MCF 10A (cell line): ENCODE measurements at regions of chr22 and their contacts with region 1.

Region 1: GRCh38 chr22:39543095-39543494 is 10.5 kb upstream of the RPS19BP1 start:
- DNase-seq: no peak
- H3K4me3 Mint-ChIP-seq: no peak overlapping the region
- H3K27ac Mint-ChIP-seq: no peak overlapping the region
- H3K4me1 Mint-ChIP-seq: peaks cover 8% of the 10 kb centered on the region
- H3K27me3 Mint-ChIP-seq: peaks cover 20% of the 10 kb centered on the region
- CTCF ChIP-seq: peak; percentile 30

Region 2: GRCh38 chr22:38843716-38844660 is 699.1 kb before region 1 on chr22 and contains the start of gene NPTXR:
- CTCF ChIA-PET with region 1: no interaction called
- POLR2A ChIA-PET with region 1: no interaction called
- intact Hi-C with region 1: no loop called
- DNase-seq: no peak
- H3K4me3 Mint-ChIP-seq: peak within 1 kb of the TSS; percentile 62
- H3K27ac Mint-ChIP-seq: no peak within 1 kb of the TSS
- H3K4me1 Mint-ChIP-seq: peaks cover 14% of the 10 kb centered on the region
- H3K27me3 Mint-ChIP-seq: peaks cover 58% of the 10 kb centered on the region
- CTCF ChIP-seq: no peak
- total RNA-seq, gene NPTXR: 0.93 and 0.96 TPM in 2 replicates

Region 3: GRCh38 chr22:39943337-39943736 is 400.2 kb after region 1 on chr22:
- CTCF ChIA-PET with region 1: no interaction called
- POLR2A ChIA-PET with region 1: no interaction called
- intact Hi-C with region 1: loop called (anchors 5 kb)
- DNase-seq: no peak
- H3K4me3 Mint-ChIP-seq: no peak overlapping the region
- H3K27ac Mint-ChIP-seq: no peak overlapping the region
- H3K4me1 Mint-ChIP-seq: no peaks in the 10 kb centered on the region
- H3K27me3 Mint-ChIP-seq: no peaks in the 10 kb centered on the region
- CTCF ChIP-seq: no peak